ENCODE measurements at regions of chr11 and their contacts with region 1.

Region 1: GRCh38 chr11:96254087-96254486 is 88.9 kb downstream of the MAML2 start:
- DNase-seq: peak in 2 of 3 donors; percentile 14 to 61
- ATAC-seq: peak; percentile 53 to 60
- H3K4me3 ChIP-seq: peak overlapping the region; percentile 54
- H3K27ac ChIP-seq: no peak overlapping the region
- H3K4me1 ChIP-seq: peaks cover 5% of the 10 kb centered on the region
- H3K27me3 ChIP-seq: no peaks in the 10 kb centered on the region

Region 2: DNA sequence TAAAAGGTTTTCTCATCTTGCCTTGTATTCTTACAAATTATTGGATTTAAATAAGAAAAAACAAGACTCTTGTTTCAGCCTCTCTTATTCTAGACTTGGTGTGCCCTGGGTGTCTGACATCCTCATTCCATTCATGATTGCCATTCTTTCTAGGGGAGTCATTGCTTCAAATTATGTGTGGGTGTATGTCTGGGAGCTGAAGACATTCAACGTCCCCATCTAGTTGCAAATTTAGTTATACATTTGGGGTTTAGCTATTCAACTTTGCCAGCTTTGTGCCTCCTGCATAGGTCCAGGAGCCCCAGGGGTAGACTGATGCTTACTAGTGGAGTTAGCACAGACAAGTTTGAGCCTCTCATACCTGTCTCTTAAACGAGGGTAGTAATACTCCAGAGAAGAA is 70.9 kb after region 1 on chr11:
- intact Hi-C with region 1: loop called in 1 of 4 experiments (anchors 10 kb)
- DNase-seq: no peak
- ATAC-seq: no peak
- H3K4me3 ChIP-seq: no peak overlapping the region
- H3K27ac ChIP-seq: no peak overlapping the region
- H3K4me1 ChIP-seq: peaks cover 7% of the 10 kb centered on the region
- H3K27me3 ChIP-seq: no peaks in the 10 kb centered on the region

Measured in right cardiac atrium (tissue), 5 donors.